Caco-2 (cell line): ENCODE measurements at regions of chr1 and their contacts with region 1.

Region 1: GRCh38 chr1:157156058-157156541 is 17.9 kb upstream of the ETV3 start:
- DNase-seq: peak; percentile 79 to 89
- H3K4me3 ChIP-seq: peak overlapping the region; percentile 24
- H3K4me3 Mint-ChIP-seq: peak overlapping the region; percentile 77
- H3K27ac Mint-ChIP-seq: peak overlapping the region; percentile 91
- H3K4me1 ChIP-seq: peaks cover 26% of the 10 kb centered on the region
- H3K4me1 Mint-ChIP-seq: peaks cover 27% of the 10 kb centered on the region
- H3K27me3 ChIP-seq: no peaks in the 10 kb centered on the region
- H3K27me3 Mint-ChIP-seq: no peaks in the 10 kb centered on the region
- CTCF ChIP-seq: peak; percentile 92 to 97

Region 2: DNA sequence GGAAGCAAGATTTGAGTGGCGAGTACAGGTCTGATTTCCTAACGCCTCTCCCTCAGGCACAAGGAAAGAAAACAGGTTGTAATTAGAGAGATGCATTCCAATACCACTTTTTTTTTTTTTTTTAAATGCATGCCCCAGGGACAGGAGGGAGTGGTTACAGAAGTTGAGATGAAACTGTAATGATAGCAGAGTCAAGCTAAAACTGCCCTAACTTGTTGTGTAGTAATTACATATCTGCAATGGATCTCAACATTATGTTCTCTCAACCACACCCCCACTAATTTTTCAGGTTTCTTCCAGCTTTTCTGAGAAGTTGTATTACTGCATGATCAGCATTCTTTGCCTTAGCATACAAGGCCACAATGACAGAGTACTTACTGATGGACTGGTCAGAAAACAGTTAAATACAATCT is 23.5 kb before region 1 on chr1:
- CTCF ChIA-PET with region 1: interaction called, 72 read pairs
- POLR2A ChIA-PET with region 1: interaction called, 8 read pairs
- intact Hi-C with region 1: loop called (anchors 1 kb)
- DNase-seq: peak in 1 of 2 experiments; percentile 42
- H3K4me3 ChIP-seq: no peak overlapping the region
- H3K4me3 Mint-ChIP-seq: no peak overlapping the region
- H3K27ac Mint-ChIP-seq: peak overlapping the region; percentile 4
- H3K4me1 ChIP-seq: peaks cover 63% of the 10 kb centered on the region
- H3K4me1 Mint-ChIP-seq: peaks cover 43% of the 10 kb centered on the region
- H3K27me3 ChIP-seq: no peaks in the 10 kb centered on the region
- H3K27me3 Mint-ChIP-seq: no peaks in the 10 kb centered on the region
- CTCF ChIP-seq: no peak

Region 3: DNA sequence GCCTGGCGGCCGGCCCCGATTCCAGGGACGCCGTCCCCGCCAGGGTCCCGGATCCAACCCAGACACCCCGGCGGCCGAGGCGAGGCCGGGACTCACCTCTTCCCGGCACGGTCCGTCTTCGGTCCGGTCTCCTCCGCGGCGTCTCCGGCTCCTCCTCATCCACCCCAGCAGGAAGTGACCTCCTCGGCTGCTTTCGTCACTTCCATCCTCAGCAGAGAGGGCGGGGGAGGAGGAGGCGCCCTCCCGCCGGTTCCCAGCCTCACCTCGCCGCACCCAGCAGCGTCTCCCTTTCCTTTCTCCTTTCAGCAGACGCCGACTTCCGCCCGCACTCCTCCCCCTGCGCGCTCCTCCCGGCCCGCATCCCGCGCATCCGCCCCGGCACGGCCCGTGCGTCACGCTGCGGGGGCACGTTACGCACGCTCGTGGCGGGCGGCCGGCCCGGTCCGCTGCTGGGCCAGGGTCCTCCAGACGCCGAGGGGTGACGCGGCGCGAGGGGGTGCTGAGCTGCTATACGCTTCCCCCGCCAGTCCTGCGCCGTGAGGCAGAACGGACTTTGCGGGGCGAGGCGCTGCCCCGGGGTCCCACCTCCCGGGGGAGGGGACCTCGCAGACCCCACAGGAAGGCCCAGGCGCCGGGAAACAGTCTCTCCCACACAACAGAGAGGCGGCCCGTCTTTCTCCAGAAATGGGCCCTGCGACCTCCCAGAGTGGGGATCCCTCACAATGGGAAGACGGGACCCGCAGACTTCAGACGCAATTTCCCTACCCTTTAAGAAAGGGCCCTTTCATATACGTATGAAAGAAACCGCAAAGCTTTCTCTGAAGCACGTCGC is 17.7 kb before region 1 on chr1 and contains the start of gene ETV3:
- CTCF ChIA-PET with region 1: interaction called, 72 read pairs
- POLR2A ChIA-PET with region 1: interaction called, 8 read pairs
- intact Hi-C with region 1: loop called (anchors 1 kb)
- DNase-seq: peak; percentile 92 to 93
- H3K4me3 ChIP-seq: peak within 1 kb of the TSS; percentile 97
- H3K4me3 Mint-ChIP-seq: peak within 1 kb of the TSS; percentile 91
- H3K27ac Mint-ChIP-seq: peak within 1 kb of the TSS; percentile 87
- H3K4me1 ChIP-seq: peaks cover 39% of the 10 kb centered on the region
- H3K4me1 Mint-ChIP-seq: peaks cover 29% of the 10 kb centered on the region
- H3K27me3 ChIP-seq: no peaks in the 10 kb centered on the region
- H3K27me3 Mint-ChIP-seq: no peaks in the 10 kb centered on the region
- CTCF ChIP-seq: no peak
- total RNA-seq, gene ETV3: 25.8 and 27.5 TPM in 2 replicates

Region 4: GRCh38 chr1:157335056-157335455 is 179.0 kb after region 1 on chr1:
- CTCF ChIA-PET with region 1: no interaction called
- POLR2A ChIA-PET with region 1: no interaction called
- intact Hi-C with region 1: no loop called
- DNase-seq: no peak
- H3K4me3 ChIP-seq: no peak overlapping the region
- H3K4me3 Mint-ChIP-seq: no peak overlapping the region
- H3K27ac Mint-ChIP-seq: no peak overlapping the region
- H3K4me1 ChIP-seq: no peaks in the 10 kb centered on the region
- H3K4me1 Mint-ChIP-seq: peaks cover 8% of the 10 kb centered on the region
- H3K27me3 ChIP-seq: no peaks in the 10 kb centered on the region
- H3K27me3 Mint-ChIP-seq: no peaks in the 10 kb centered on the region
- CTCF ChIP-seq: no peak

Region 5: DNA sequence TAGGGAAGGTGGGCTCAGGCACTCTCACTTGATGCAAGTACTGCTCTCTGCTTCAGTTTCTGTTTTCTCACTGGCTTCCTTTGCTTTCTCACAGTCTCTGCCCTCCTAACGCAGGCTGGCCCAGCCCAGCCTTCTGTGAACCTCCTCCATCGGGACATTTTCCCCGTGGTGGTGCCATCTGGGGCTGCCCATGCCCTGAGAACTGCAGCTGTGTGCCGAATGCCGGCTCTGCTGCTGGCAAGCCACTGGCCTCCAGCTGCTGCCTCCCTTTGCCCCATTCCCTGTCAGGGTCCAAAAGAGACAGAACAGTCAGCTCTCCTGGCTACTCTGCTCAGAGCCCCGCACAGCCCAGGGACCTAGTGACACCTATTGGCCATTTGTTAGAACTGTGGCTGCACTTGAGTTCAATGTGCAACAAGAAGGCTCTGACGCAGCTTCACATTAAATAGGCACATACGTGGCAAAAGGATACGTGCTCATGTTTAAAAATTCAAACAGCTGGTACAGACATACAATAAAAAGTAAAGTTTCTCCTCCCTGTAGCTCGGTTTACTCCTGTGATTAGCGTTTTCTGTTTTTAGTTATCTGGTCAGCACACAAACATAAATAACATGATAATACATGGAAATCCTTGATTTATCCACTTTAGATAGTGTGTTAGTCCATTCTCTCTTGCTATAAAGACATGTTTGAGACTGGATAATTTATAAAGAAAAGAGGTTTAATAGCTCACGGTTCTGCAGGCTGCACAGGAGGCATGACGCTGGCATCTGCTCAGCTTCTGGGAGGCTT is 349.6 kb after region 1 on chr1:
- CTCF ChIA-PET with region 1: no interaction called
- POLR2A ChIA-PET with region 1: no interaction called
- intact Hi-C with region 1: no loop called
- DNase-seq: peak; percentile 63 to 73
- H3K4me3 ChIP-seq: no peak overlapping the region
- H3K4me3 Mint-ChIP-seq: no peak overlapping the region
- H3K27ac Mint-ChIP-seq: no peak overlapping the region
- H3K4me1 ChIP-seq: peaks cover 26% of the 10 kb centered on the region
- H3K4me1 Mint-ChIP-seq: peaks cover 14% of the 10 kb centered on the region
- H3K27me3 ChIP-seq: no peaks in the 10 kb centered on the region
- H3K27me3 Mint-ChIP-seq: no peaks in the 10 kb centered on the region
- CTCF ChIP-seq: peak; percentile 65 to 84